CD4-positive, alpha-beta memory T cell (primary cell): ENCODE measurements at regions of chr17 and their contacts with region 1.

Region 1: GRCh38 chr17:34980681-34981537 is 597 bp downstream of the LIG3 start:
- DNase-seq: peak in 4 of 5 donors; percentile 72 to 83 (median 78)
- H3K4me3 ChIP-seq: peak overlapping the region; percentile 53 to 68
- H3K4me3 Mint-ChIP-seq: peak overlapping the region; percentile 88 to 95 (median 91)
- H3K27ac ChIP-seq: peak overlapping the region; percentile 97
- H3K27ac Mint-ChIP-seq: peak overlapping the region; percentile 90 to 98 (median 94)
- H3K4me1 ChIP-seq: peaks cover 41% of the 10 kb centered on the region
- H3K4me1 Mint-ChIP-seq: peaks cover 39 to 58% (median 49%) of the 10 kb centered on the region in 4 donors
- H3K27me3 ChIP-seq: no peaks in the 10 kb centered on the region
- H3K27me3 Mint-ChIP-seq: no peaks in the 10 kb centered on the region

Region 2: GRCh38 chr17:34451313-34451712 is 529.6 kb before region 1 on chr17:
- CTCF ChIA-PET with region 1: no interaction called
- POLR2A ChIA-PET with region 1: no interaction called
- intact Hi-C with region 1: no loop called
- DNase-seq: no peak
- H3K4me3 ChIP-seq: no peak overlapping the region
- H3K4me3 Mint-ChIP-seq: no peak overlapping the region
- H3K27ac ChIP-seq: no peak overlapping the region
- H3K27ac Mint-ChIP-seq: no peak overlapping the region
- H3K4me1 ChIP-seq: no peaks in the 10 kb centered on the region
- H3K4me1 Mint-ChIP-seq: no peaks in the 10 kb centered on the region
- H3K27me3 ChIP-seq: no peaks in the 10 kb centered on the region
- H3K27me3 Mint-ChIP-seq: peaks cover 15 to 29% of the 10 kb centered on the region in 2 donors

Region 3: GRCh38 chr17:34542700-34543336 is 438.1 kb before region 1 on chr17:
- CTCF ChIA-PET with region 1: interaction called, 8 read pairs
- POLR2A ChIA-PET with region 1: no interaction called
- intact Hi-C with region 1: loop called (anchors 1 kb)
- DNase-seq: peak in 4 of 5 donors; percentile 41 to 52 (median 48)
- H3K4me3 ChIP-seq: no peak overlapping the region
- H3K4me3 Mint-ChIP-seq: no peak overlapping the region
- H3K27ac ChIP-seq: no peak overlapping the region
- H3K27ac Mint-ChIP-seq: no peak overlapping the region
- H3K4me1 ChIP-seq: no peaks in the 10 kb centered on the region
- H3K4me1 Mint-ChIP-seq: no peaks in the 10 kb centered on the region
- H3K27me3 ChIP-seq: no peaks in the 10 kb centered on the region
- H3K27me3 Mint-ChIP-seq: peaks cover 17 to 26% of the 10 kb centered on the region in 2 donors

Region 4: DNA sequence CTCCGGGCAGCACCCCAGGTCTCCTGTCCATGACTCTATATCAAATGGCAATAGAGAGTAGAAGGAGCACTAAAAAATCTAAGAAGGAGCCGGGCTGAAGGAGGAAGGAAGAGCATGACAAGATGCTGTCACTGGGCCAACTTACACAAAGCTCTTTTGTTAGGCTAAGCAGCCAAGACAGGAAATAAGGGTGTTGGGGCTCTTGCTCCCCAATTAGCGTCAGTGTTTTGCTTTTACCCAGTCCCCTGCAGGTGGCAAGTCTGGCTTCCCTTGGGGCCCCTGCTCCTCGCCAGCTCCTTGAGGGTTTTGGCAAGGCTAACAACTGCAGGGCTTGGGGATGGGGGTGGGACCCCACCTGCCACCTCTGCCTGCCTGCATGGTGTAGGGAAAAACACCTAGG is 140.2 kb before region 1 on chr17:
- CTCF ChIA-PET with region 1: no interaction called
- POLR2A ChIA-PET with region 1: no interaction called
- intact Hi-C with region 1: loop called (anchors 5 kb)
- DNase-seq: peak in 4 of 5 donors; percentile 39 to 51 (median 49)
- H3K4me3 ChIP-seq: peak overlapping the region in 1 of 2 donors; percentile 5
- H3K4me3 Mint-ChIP-seq: peak overlapping the region in 5 of 8 donors; percentile 11 to 58 (median 34)
- H3K27ac ChIP-seq: no peak overlapping the region
- H3K27ac Mint-ChIP-seq: peak overlapping the region; percentile 72 to 93 (median 81)
- H3K4me1 ChIP-seq: peaks cover 67% of the 10 kb centered on the region
- H3K4me1 Mint-ChIP-seq: peaks cover 0 to 23% (median 11%) of the 10 kb centered on the region in 4 donors
- H3K27me3 ChIP-seq: peaks cover 3% of the 10 kb centered on the region
- H3K27me3 Mint-ChIP-seq: peaks cover 0 to 2% of the 10 kb centered on the region in 2 donors

Region 5: GRCh38 chr17:34874478-34874877 is 106.4 kb before region 1 on chr17:
- CTCF ChIA-PET with region 1: no interaction called
- POLR2A ChIA-PET with region 1: no interaction called
- intact Hi-C with region 1: no loop called
- DNase-seq: no peak
- H3K4me3 ChIP-seq: no peak overlapping the region
- H3K4me3 Mint-ChIP-seq: no peak overlapping the region
- H3K27ac ChIP-seq: no peak overlapping the region
- H3K27ac Mint-ChIP-seq: no peak overlapping the region
- H3K4me1 ChIP-seq: no peaks in the 10 kb centered on the region
- H3K4me1 Mint-ChIP-seq: no peaks in the 10 kb centered on the region
- H3K27me3 ChIP-seq: no peaks in the 10 kb centered on the region
- H3K27me3 Mint-ChIP-seq: peaks cover 7 to 12% of the 10 kb centered on the region in 2 donors

Region 6: GRCh38 chr17:34990921-34991365 is 10.0 kb after region 1 on chr17:
- CTCF ChIA-PET with region 1: interaction called, 15 read pairs
- POLR2A ChIA-PET with region 1: interaction called, 8 read pairs
- intact Hi-C with region 1: no loop called
- DNase-seq: no peak
- H3K4me3 ChIP-seq: no peak overlapping the region
- H3K4me3 Mint-ChIP-seq: no peak overlapping the region
- H3K27ac ChIP-seq: no peak overlapping the region
- H3K27ac Mint-ChIP-seq: peak overlapping the region in 3 of 7 donors; percentile 4 to 41 (median 32)
- H3K4me1 ChIP-seq: no peaks in the 10 kb centered on the region
- H3K4me1 Mint-ChIP-seq: peaks cover 0 to 8% (median 5%) of the 10 kb centered on the region in 4 donors
- H3K27me3 ChIP-seq: no peaks in the 10 kb centered on the region
- H3K27me3 Mint-ChIP-seq: no peaks in the 10 kb centered on the region

Region 7: DNA sequence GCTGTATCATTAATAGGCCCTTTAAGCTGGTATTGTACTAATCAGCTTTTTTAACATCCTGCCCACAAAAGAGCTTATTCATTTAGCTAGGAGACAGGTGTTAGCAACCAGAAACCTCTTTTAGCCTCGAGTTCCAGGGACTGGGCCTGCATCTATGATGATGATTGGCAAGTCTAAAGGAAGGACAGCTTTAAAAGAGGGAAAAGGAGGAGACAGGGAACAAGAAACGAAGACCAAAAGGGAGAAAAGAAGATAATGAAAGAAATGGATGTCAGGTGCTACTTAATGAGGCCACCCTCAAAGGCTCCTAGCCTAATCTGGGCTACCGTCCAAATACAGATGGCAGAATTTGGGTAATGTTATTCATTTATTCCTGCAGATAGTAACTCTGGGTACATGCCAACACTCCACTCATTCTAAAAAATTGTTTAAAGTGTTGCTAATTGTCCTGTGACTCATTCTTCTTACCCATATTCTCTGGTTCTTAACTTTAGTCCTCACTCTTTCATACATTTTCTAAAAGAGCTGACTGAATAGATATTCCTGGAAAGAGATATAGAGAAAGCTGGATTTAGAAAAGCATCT is 101.3 kb after region 1 on chr17:
- CTCF ChIA-PET with region 1: interaction called, 3 read pairs
- POLR2A ChIA-PET with region 1: interaction called, 10 read pairs
- intact Hi-C with region 1: no loop called
- DNase-seq: peak in 2 of 5 donors; percentile 26 to 49
- H3K4me3 ChIP-seq: no peak overlapping the region
- H3K4me3 Mint-ChIP-seq: peak overlapping the region; percentile 58 to 83 (median 76)
- H3K27ac ChIP-seq: peak overlapping the region; percentile 52
- H3K27ac Mint-ChIP-seq: peak overlapping the region; percentile 71 to 98 (median 97)
- H3K4me1 ChIP-seq: peaks cover 82% of the 10 kb centered on the region
- H3K4me1 Mint-ChIP-seq: peaks cover 58 to 82% (median 74%) of the 10 kb centered on the region in 4 donors
- H3K27me3 ChIP-seq: no peaks in the 10 kb centered on the region
- H3K27me3 Mint-ChIP-seq: no peaks in the 10 kb centered on the region